HEK293 (cell line): ENCODE measurements at regions of chr11 and their contacts with region 1.

Region 1: DNA sequence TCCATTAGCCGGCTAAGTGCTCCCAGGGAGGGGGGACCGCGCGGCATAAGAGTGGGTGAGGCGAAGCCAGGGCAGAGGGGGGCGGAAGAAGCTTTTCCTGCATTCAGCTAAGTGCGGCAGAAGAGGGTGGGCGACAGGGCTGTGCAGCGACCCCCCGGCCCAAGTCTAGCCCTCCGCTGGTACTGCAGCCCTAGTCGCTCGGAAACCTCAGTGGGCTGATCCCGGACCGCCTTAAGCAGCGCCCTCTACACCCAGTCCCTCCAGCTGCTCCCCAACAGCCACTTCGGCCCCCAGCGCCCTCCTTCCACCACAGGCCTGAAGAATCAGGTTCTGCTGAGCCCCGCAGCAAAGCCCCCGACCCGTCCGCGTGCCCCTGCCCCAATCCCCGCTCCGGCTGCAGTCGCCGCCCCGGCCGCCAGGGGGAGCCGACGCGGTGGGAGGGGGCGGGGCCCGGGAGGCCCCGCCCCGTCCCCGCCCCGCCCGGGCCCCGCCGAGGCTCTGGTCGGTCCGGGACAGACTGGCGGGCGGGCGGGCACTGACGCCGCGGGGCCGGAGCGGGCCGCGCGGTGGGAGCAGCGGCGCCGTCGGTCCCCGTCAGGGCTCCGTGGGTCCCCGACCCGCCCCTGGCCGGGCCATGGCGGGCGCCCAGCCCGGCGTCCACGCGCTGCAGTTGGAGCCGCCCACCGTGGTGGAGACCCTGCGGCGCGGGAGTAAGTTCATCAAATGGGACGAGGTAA is at the start of gene PLCB3:
- H3K4me3 ChIP-seq: peak within 1 kb of the TSS; percentile 48
- H3K27ac ChIP-seq: peak within 1 kb of the TSS; percentile 3; the same call in 1 of the 2 replicates
- H3K4me1 ChIP-seq: peaks cover 10% of the 10 kb centered on the region
- CTCF ChIP-seq: peak; percentile 94

Region 2: GRCh38 chr11:63573881-63574855 is 677.0 kb before region 1 on chr11:
- CTCF ChIA-PET with region 1: interaction called, 10 read pairs
- POLR2A ChIA-PET with region 1: no interaction called
- H3K4me3 ChIP-seq: no peak overlapping the region
- H3K27ac ChIP-seq: no peak overlapping the region
- H3K4me1 ChIP-seq: no peaks in the 10 kb centered on the region
- CTCF ChIP-seq: no peak

Region 3: DNA sequence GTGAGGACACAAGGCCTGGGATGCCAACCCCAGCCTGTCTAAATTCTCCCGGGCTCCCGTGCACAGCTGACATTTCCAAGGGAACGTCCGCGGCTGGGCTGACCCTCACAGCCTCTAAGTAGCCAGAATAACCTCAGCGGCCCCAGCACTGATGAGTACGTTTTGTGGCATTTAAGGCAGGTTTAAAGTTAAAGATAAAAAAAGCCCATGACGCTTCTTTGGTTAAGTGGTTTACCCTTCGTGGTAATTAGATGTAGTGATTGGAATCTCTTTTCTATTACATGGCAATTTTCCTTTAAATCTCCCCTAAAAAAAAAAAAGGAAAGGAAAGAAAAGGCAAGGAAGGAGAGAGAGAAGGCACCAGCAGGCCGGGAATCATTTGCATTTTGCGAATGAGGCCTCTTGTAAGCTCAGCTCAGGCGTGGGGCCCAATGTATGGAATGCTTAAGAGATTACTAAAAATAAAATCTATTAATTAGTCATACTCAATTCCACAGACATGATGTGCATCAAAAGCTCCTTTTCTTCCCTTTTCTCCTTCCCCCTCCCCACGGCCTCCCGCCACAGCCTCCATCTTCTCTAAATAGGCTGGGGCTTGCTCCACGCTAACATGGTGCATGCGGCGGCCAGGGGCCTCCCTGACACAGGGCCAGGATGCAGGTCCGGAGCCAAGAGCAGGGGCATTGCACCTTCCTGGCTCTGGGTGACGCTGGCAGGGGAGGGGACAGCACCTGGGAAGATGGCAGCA is 129.3 kb before region 1 on chr11:
- CTCF ChIA-PET with region 1: no interaction called
- POLR2A ChIA-PET with region 1: no interaction called
- H3K4me3 ChIP-seq: no peak overlapping the region
- H3K27ac ChIP-seq: no peak overlapping the region
- H3K4me1 ChIP-seq: peaks cover 3% of the 10 kb centered on the region; the same call in 1 of the 2 replicates
- CTCF ChIP-seq: no peak

Region 4: GRCh38 chr11:64233913-64234834 is 17.0 kb before region 1 on chr11 and contains the start of gene VEGFB:
- CTCF ChIA-PET with region 1: interaction called, 12 read pairs
- POLR2A ChIA-PET with region 1: interaction called, 18 read pairs
- H3K4me3 ChIP-seq: peak within 1 kb of the TSS; percentile 43
- H3K27ac ChIP-seq: peak within 1 kb of the TSS; percentile 68; the same call in 1 of the 2 replicates
- H3K4me1 ChIP-seq: no peaks in the 10 kb centered on the region
- CTCF ChIP-seq: peak; percentile 22; the same call in 1 of the 2 replicates

Region 5: GRCh38 chr11:64240394-64241174 is 10.6 kb before region 1 on chr11 and contains the start of gene FKBP2:
- CTCF ChIA-PET with region 1: interaction called, 5 read pairs
- POLR2A ChIA-PET with region 1: interaction called, 14 read pairs
- H3K4me3 ChIP-seq: peak within 1 kb of the TSS; percentile 75
- H3K27ac ChIP-seq: peak within 1 kb of the TSS; percentile 83
- H3K4me1 ChIP-seq: no peaks in the 10 kb centered on the region
- CTCF ChIP-seq: no peak

Region 6: DNA sequence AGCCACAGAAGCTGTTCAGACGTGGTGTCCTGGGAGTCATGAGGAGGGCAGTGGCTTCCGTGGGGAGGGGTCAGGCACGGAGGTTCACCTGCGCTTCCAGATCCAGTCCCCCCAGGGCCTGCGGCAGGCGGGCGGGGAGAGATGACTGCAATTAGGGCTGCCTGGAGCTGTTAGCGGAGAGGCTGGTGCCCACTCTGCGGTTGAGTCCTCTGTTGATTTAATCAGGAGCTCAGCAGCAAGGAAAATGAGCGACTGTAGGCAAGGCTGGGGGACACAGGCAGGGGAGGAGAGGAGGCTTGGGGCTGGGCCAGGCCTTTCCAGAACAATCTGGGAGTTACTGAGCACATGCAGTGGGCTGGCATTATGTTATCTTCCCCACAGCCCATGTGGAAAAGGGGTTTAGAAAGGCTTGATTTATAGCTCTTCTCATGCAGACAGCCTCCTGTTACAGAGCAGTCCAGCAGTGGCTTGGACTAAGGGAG is 13.2 kb after region 1 on chr11:
- CTCF ChIA-PET with region 1: interaction called, 11 read pairs
- POLR2A ChIA-PET with region 1: interaction called, 96 read pairs
- H3K4me3 ChIP-seq: no peak overlapping the region
- H3K27ac ChIP-seq: no peak overlapping the region
- H3K4me1 ChIP-seq: peaks cover 2% of the 10 kb centered on the region; the same call in 1 of the 2 replicates
- CTCF ChIP-seq: no peak

Region 7: GRCh38 chr11:64269380-64270234 is 18.4 kb after region 1 on chr11:
- CTCF ChIA-PET with region 1: interaction called, 11 read pairs
- POLR2A ChIA-PET with region 1: interaction called, 96 read pairs
- H3K4me3 ChIP-seq: peak overlapping the region; percentile 70
- H3K27ac ChIP-seq: peak overlapping the region; percentile 83
- H3K4me1 ChIP-seq: 0 out of 2 replicates have a peak, but pooled peaks cover 2% of the 10 kb centered on the region
- CTCF ChIP-seq: 0 out of 2 replicates have a peak, but pooled peaks have one; percentile 25